ENCODE measurements at regions of chr15 and their contacts with region 1.

Region 1: GRCh38 chr15:58484791-58485600 is 53.2 kb downstream of the LIPC start:
- DNase-seq: peak; percentile 46
- H3K4me3 Mint-ChIP-seq: peak overlapping the region; percentile 43
- H3K27ac Mint-ChIP-seq: peak overlapping the region; percentile 96
- H3K4me1 Mint-ChIP-seq: peaks cover 40% of the 10 kb centered on the region
- H3K27me3 Mint-ChIP-seq: no peaks in the 10 kb centered on the region

Region 2: DNA sequence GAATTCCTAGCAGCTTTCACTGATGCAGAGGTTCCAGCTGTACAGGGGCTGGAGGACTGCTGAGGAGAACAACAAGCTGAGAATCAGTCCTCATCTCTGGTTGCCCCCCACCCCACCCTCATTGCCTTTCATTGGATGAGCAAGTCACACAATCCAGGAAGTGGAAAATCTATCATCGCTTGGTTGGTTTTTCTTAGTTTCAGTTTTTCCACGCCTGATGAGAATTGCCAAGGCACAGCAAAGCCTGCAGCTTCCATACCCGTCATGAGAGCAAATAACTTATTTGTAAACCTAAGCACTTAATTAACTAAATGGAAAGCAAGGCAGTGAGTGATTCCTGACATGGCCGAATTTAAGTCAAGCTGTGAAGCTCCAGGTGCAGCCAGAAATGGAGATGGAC is 74.6 kb before region 1 on chr15:
- intact Hi-C with region 1: no loop called
- DNase-seq: no peak
- H3K4me3 Mint-ChIP-seq: peak overlapping the region; percentile 81
- H3K27ac Mint-ChIP-seq: peak overlapping the region; percentile 88
- H3K4me1 Mint-ChIP-seq: peaks cover 22% of the 10 kb centered on the region
- H3K27me3 Mint-ChIP-seq: no peaks in the 10 kb centered on the region

Region 3: DNA sequence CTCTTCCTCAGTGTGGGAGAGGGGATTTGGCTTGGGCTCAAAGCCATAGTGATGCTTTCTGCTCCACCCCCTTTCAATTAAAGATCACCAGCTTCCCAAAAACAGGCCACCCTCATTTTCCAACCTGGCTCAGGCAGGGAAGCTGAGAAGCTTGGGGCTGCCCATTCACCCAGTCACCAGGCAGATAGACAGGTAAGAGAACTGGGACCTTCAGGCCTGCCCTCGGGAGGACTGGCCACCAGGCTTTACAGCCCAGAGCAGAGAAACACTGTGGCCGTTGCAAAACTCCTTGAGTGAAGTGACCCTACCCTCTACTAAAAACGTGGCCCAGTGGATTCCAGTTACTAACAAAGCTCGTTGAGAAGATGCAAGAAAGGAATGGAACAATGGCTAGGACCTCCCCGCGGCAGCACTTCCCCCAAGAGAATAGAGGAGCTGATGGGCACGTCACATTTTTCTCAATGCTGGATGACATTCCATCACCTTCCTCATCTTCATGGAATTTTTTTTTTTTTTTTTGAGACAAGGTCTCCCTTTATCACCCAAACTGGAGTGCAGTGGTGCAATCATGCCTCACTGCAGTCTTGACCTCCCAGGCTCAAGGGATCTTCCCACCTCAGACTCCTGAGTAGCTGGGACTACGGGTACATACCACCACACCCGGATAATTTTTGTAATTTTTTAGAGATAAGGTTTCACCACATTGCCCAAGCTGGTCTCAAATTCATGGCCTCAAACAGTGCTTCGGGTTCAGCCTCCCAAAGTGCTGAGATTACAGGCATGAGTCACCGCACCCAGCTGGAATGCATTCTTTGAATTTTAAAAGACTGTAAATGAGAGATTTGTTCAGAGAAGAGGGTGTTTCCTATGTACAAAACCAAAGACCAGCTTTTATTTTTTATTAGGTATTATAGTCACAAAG is 15.3 kb before region 1 on chr15:
- intact Hi-C with region 1: loop called (anchors 1 kb)
- DNase-seq: no peak
- H3K4me3 Mint-ChIP-seq: no peak overlapping the region
- H3K27ac Mint-ChIP-seq: no peak overlapping the region
- H3K4me1 Mint-ChIP-seq: peaks cover 48% of the 10 kb centered on the region
- H3K27me3 Mint-ChIP-seq: no peaks in the 10 kb centered on the region